ENCODE measurements at regions of chr10 and their contacts with region 1.

Region 1: GRCh38 chr10:51675088-51675487 is 24.3 kb downstream of the CSTF2T start:
- DNase-seq: no peak
- H3K4me3 ChIP-seq: no peak overlapping the region
- H3K27ac ChIP-seq: no peak overlapping the region
- H3K4me1 ChIP-seq: no peaks in the 10 kb centered on the region
- H3K27me3 ChIP-seq: peaks cover 0 to 6% of the 10 kb centered on the region in 2 experiments
- CTCF ChIP-seq: no peak
- POLR2A ChIP-seq: no peak

Region 2: GRCh38 chr10:51629934-51630639 is 45.0 kb before region 1 on chr10:
- CTCF ChIA-PET with region 1: no interaction called
- POLR2A ChIA-PET with region 1: no interaction called
- dilution Hi-C with region 1: no loop called
- intact Hi-C with region 1: loop called (anchors 5 kb)
- DNase-seq: no peak
- H3K4me3 ChIP-seq: no peak overlapping the region
- H3K27ac ChIP-seq: no peak overlapping the region
- H3K4me1 ChIP-seq: no peaks in the 10 kb centered on the region
- H3K27me3 ChIP-seq: peaks cover 8 to 19% of the 10 kb centered on the region in 2 experiments
- CTCF ChIP-seq: no peak
- POLR2A ChIP-seq: no peak